ENCODE measurements at regions of chr12 and their contacts with region 1.

Region 1: GRCh38 chr12:32659908-32660440 is 19.1 kb upstream of the DNM1L start:
- DNase-seq: no peak
- ATAC-seq: peak in 1 of 2 experiments; percentile 23; a peak in 1 of 6 replicates
- H3K4me3 ChIP-seq: no peak overlapping the region
- H3K27ac ChIP-seq: no peak overlapping the region
- H3K4me1 ChIP-seq: peaks cover 3% of the 10 kb centered on the region; the same call in 2 of the 3 replicates
- CTCF ChIP-seq: no peak
- EP300 ChIP-seq: no peak
- POLR2A ChIP-seq: no peak
- RAD21 ChIP-seq: no peak

Region 2: GRCh38 chr12:32365473-32366064 is 294.4 kb before region 1 on chr12:
- CTCF ChIA-PET with region 1: interaction called, 29 read pairs
- POLR2A ChIA-PET with region 1: no interaction called
- DNase-seq: peak; percentile 49 to 81
- ATAC-seq: peak; percentile 76 to 85; a peak in 5 of 6 replicates
- H3K4me3 ChIP-seq: no peak overlapping the region
- H3K27ac ChIP-seq: no peak overlapping the region; a peak in 1 of 6 replicates
- H3K4me1 ChIP-seq: peaks cover 15% of the 10 kb centered on the region; the same call in 2 of the 3 replicates
- CTCF ChIP-seq: peak; percentile 91
- EP300 ChIP-seq: no peak
- POLR2A ChIP-seq: no peak
- RAD21 ChIP-seq: peak; percentile 94 to 96

Region 3: DNA sequence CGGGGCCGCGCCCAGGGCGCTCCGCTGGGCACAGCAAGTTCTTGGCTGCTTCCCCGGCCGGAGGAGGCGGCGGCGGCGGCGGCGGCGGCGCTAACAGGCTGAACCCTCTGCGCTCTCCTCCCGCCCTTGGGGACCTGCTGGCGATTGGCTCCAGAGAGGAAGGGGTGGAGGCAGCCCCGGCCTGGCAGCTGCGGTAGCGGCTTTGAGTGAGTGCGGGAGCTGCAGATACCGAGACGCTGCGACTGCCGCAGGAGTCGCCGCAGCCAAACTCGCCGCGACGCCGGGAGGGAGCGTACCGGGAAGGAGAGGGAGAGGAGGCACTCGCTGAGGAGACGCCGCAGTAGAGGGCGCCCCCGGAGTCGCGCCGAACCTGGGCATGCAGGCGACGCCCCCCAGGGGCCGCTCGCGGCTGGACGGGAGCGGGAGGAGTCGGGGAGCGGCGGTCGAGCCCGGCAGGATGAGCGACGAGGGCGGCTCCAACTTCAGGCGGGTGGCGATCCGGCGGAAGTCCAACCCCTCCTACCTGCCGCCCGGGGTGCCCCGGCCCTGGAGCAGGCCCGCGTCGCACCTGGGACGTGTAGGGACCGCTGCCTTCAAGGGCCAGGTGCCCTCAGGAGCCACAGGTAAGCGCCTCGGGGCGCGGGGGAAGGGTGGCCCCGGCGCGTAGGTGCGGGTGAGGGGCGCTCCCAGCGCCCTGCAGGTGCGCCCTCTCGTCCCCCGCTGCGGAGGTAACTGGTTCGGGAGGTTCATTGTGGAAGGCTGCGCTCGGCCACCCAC is 260.4 kb before region 1 on chr12 and contains the start of gene FGD4:
- CTCF ChIA-PET with region 1: interaction called, 14 read pairs
- POLR2A ChIA-PET with region 1: no interaction called
- DNase-seq: peak; percentile 88 to 91
- ATAC-seq: peak; percentile 94 to 97
- H3K4me3 ChIP-seq: peak within 1 kb of the TSS; percentile 83
- H3K27ac ChIP-seq: peak within 1 kb of the TSS; percentile 85 to 88
- H3K4me1 ChIP-seq: peaks cover 15% of the 10 kb centered on the region; the same call in 2 of the 3 replicates
- CTCF ChIP-seq: peak; percentile 64
- EP300 ChIP-seq: no peak
- POLR2A ChIP-seq: peak; percentile 55
- RAD21 ChIP-seq: peak; percentile 49 to 67
- polyA plus RNA-seq, gene FGD4: 5.6 and 6.0 TPM in 2 replicates

Region 4: DNA sequence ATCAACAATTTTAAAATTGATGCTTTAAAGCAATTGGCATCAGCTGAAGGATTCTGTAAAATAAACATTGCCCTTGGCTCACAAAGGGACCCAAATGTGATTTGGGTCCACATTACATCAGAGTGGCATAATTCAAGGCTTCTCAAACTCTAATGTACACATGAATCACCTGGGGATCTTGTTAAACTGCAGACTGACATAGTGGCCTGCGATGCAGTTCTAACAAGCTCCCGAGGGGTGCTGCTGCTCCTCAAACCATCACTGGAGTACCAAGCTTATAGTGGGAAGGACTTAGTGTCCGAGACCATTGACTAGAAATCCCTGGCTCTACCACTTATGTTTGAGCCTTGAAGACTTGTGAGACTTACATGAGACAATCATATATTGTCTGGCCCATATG is 12.7 kb before region 1 on chr12:
- CTCF ChIA-PET with region 1: interaction called, 13 read pairs
- POLR2A ChIA-PET with region 1: no interaction called
- DNase-seq: no peak
- ATAC-seq: peak; percentile 49 to 64; a peak in 3 of 6 replicates
- H3K4me3 ChIP-seq: no peak overlapping the region
- H3K27ac ChIP-seq: no peak overlapping the region
- H3K4me1 ChIP-seq: no peaks in the 10 kb centered on the region
- CTCF ChIP-seq: no peak
- EP300 ChIP-seq: no peak
- POLR2A ChIP-seq: no peak
- RAD21 ChIP-seq: no peak

Region 5: GRCh38 chr12:32671930-32672780 is 12.2 kb after region 1 on chr12:
- CTCF ChIA-PET with region 1: interaction called, 15 read pairs
- POLR2A ChIA-PET with region 1: no interaction called
- DNase-seq: peak; percentile 61 to 73
- ATAC-seq: peak; percentile 87 to 90
- H3K4me3 ChIP-seq: no peak overlapping the region
- H3K27ac ChIP-seq: no peak overlapping the region
- H3K4me1 ChIP-seq: no peaks in the 10 kb centered on the region
- CTCF ChIP-seq: peak; percentile 80
- EP300 ChIP-seq: no peak
- POLR2A ChIP-seq: no peak
- RAD21 ChIP-seq: peak; percentile 90 to 93

Measured in A549 (cell line).